Heart left ventricle (tissue), 16 donors: ENCODE measurements at regions of chr1 and their contacts with region 1.

Region 1: GRCh38 chr1:87045761-87046304 is 131.4 kb downstream of the HS2ST1 start:
- DNase-seq: no peak
- ATAC-seq: no peak
- H3K4me3 ChIP-seq: no peak overlapping the region
- H3K27ac ChIP-seq: no peak overlapping the region
- H3K4me1 ChIP-seq: peaks cover 0 to 4% (median 0%) of the 10 kb centered on the region in 12 donors
- H3K27me3 ChIP-seq: no peaks in the 10 kb centered on the region
- CTCF ChIP-seq: no peak
- POLR2A ChIP-seq: no peak

Region 2: GRCh38 chr1:86981482-86982213 is 64.2 kb before region 1 on chr1:
- intact Hi-C with region 1: no loop called
- DNase-seq: no peak
- ATAC-seq: no peak
- H3K4me3 ChIP-seq: no peak overlapping the region
- H3K27ac ChIP-seq: no peak overlapping the region
- H3K4me1 ChIP-seq: no peaks in the 10 kb centered on the region
- H3K27me3 ChIP-seq: no peaks in the 10 kb centered on the region
- CTCF ChIP-seq: no peak
- POLR2A ChIP-seq: no peak

Region 3: DNA sequence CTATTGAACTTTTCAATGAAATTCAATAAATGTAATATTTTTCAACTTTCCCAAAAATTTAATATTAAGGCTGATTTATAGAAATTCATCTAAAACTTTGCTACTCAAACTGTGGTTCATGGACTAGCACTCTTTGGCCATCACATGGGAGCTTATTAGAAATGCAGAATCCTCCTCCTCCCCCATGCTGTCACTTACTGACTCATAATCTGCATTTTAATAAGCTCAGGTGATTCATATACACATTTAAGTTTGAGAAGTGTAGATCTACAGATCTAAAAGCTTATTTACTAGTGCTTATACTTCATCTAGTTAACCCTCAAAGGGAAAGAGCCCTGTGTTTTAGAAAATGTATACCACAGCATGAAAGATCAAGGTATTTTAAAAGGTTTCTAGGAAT is 47.1 kb before region 1 on chr1:
- intact Hi-C with region 1: loop called in 1 of 10 experiments (anchors 5 kb)
- DNase-seq: no peak
- ATAC-seq: no peak
- H3K4me3 ChIP-seq: no peak overlapping the region
- H3K27ac ChIP-seq: no peak overlapping the region
- H3K4me1 ChIP-seq: no peaks in the 10 kb centered on the region
- H3K27me3 ChIP-seq: no peaks in the 10 kb centered on the region
- CTCF ChIP-seq: no peak
- POLR2A ChIP-seq: no peak

Region 4: GRCh38 chr1:87151500-87152421 is 105.9 kb after region 1 on chr1:
- intact Hi-C with region 1: no loop called
- DNase-seq: peak; percentile 76 to 86 (median 81)
- ATAC-seq: peak; percentile 89 to 95 (median 94)
- H3K4me3 ChIP-seq: peak overlapping the region in 10 of 12 donors; percentile 5 to 52 (median 38)
- H3K27ac ChIP-seq: peak overlapping the region in 10 of 12 donors; percentile 31 to 69 (median 41)
- H3K4me1 ChIP-seq: peaks cover 0 to 42% (median 11%) of the 10 kb centered on the region in 12 donors
- H3K27me3 ChIP-seq: no peaks in the 10 kb centered on the region
- CTCF ChIP-seq: peak; percentile 40 to 75 (median 62)
- POLR2A ChIP-seq: no peak